Heart left ventricle (tissue), 16 donors: ENCODE measurements at regions of chr5 and their contacts with region 1.

Region 1: DNA sequence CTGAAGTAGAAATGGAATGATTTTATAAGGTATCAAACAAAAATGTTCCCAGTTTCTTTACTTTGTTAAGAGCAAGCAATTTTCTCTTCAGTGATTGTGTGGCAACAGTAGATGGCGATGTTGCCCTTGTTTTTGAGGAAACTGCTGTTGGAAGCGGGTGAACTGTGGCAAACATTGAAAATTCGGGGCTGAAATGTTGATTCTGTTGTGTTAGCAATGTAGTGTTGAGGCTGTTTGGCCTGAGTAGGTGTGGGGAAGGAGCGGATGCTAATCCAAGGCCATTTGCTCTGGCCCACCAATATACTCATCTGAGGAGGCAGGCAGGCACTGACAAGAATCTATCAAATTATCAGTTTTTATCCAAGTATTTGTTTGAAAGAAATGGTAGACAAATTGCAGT is 129.8 kb downstream of the SLC12A2 start:
- DNase-seq: peak in 4 of 5 donors; percentile 27 to 47 (median 36)
- ATAC-seq: peak in 2 of 4 donors; percentile 4 to 41
- H3K4me3 ChIP-seq: no peak overlapping the region
- H3K27ac ChIP-seq: no peak overlapping the region
- H3K4me1 ChIP-seq: peaks cover 0 to 11% (median 3%) of the 10 kb centered on the region in 12 donors
- H3K27me3 ChIP-seq: no peaks in the 10 kb centered on the region
- CTCF ChIP-seq: peak; percentile 59 to 88 (median 77)
- POLR2A ChIP-seq: no peak

Region 2: DNA sequence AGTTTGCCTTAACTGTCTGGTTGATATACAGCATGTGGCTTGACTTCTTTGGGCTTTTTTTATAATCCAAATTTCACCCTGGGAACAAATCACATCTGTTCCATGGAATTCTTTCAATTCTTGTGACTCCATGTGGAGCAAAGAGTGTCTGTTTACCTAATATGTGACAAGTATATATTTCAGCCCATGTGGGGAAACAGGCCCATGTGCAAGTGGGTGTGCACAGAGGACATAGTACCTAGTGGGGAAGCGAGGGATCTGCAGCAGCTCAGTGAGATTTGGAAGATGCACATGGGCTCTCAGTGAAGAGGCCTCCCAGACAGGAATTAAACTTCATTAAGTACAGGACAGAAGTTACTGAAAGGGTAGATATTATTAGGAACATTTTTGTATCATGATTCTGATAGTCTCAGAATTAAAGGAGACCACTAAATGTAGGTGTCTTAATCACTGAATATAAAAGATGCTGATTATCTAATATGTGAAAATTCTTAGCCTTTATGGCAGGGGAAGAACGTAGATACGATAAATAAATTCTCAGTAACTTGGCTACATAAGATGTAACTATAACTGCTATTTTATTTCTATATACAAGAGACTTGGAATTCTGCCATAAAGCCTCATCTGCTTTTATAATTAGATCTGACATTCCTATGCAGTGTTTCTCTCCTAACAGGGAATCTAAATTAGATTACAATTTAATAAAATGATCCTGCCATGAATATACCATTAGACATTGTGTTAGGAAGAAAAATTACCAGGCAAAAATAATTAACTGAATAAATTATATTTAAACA is 51.4 kb after region 1 on chr5:
- intact Hi-C with region 1: loop called in 2 of 10 experiments (anchors 5 to 10 kb)
- DNase-seq: no peak
- ATAC-seq: peak; percentile 31 to 67 (median 54)
- H3K4me3 ChIP-seq: no peak overlapping the region
- H3K27ac ChIP-seq: peak overlapping the region in 4 of 12 donors; percentile 1 to 25 (median 8)
- H3K4me1 ChIP-seq: peaks cover 0 to 30% (median 5%) of the 10 kb centered on the region in 12 donors
- H3K27me3 ChIP-seq: no peaks in the 10 kb centered on the region
- CTCF ChIP-seq: peak in 1 of 12 donors; percentile 9
- POLR2A ChIP-seq: no peak

Region 3: GRCh38 chr5:128378196-128378595 is 164.9 kb after region 1 on chr5:
- intact Hi-C with region 1: loop called in 1 of 10 experiments (anchors 10 kb)
- DNase-seq: no peak
- ATAC-seq: no peak
- H3K4me3 ChIP-seq: no peak overlapping the region
- H3K27ac ChIP-seq: no peak overlapping the region
- H3K4me1 ChIP-seq: no peaks in the 10 kb centered on the region
- H3K27me3 ChIP-seq: no peaks in the 10 kb centered on the region
- CTCF ChIP-seq: no peak
- POLR2A ChIP-seq: no peak

Region 4: DNA sequence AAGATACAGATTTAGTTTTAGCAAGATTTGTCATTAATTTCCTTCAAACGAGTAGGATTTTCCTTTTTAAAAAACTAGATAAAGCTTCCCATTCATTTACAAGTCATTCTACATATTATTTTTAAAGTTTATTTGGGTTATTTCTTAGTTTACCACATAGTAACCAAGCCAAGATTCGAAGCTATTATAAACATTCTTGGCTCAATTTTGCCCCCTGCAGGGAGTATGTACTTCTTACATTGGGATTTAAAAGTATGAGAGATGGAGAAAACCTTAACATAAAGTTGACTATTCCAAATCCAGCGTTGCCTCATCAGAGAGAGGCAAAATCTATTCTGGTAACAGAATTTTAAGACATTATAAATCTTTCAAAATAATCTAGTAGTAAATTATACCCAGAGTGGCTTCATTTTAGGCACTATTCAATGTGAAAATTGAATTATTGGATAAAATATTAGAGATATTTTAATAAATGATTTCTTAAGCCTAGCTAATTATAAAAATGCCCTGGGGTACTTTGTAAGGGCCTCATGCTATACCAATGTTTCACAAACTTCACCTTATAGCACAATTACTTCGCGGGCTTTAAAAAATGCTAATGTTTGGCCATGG is 285.6 kb after region 1 on chr5:
- intact Hi-C with region 1: loop called (anchors 1 to 2 kb)
- DNase-seq: peak in 1 of 5 donors; percentile 17
- ATAC-seq: peak in 2 of 4 donors; percentile 50 to 61
- H3K4me3 ChIP-seq: no peak overlapping the region
- H3K27ac ChIP-seq: no peak overlapping the region
- H3K4me1 ChIP-seq: peaks cover 0 to 4% (median 0%) of the 10 kb centered on the region in 12 donors
- H3K27me3 ChIP-seq: no peaks in the 10 kb centered on the region
- CTCF ChIP-seq: peak; percentile 27 to 72 (median 58)
- POLR2A ChIP-seq: no peak

Region 5: GRCh38 chr5:128674825-128675446 is 461.6 kb after region 1 on chr5:
- intact Hi-C with region 1: loop called in 4 of 10 experiments (anchors 5 to 10 kb)
- DNase-seq: peak in 1 of 5 donors; percentile 28
- ATAC-seq: no peak
- H3K4me3 ChIP-seq: no peak overlapping the region
- H3K27ac ChIP-seq: no peak overlapping the region
- H3K4me1 ChIP-seq: no peaks in the 10 kb centered on the region
- H3K27me3 ChIP-seq: no peaks in the 10 kb centered on the region
- CTCF ChIP-seq: peak; percentile 14 to 61 (median 48)
- POLR2A ChIP-seq: no peak

Region 6: GRCh38 chr5:128844354-128844923 is 631.1 kb after region 1 on chr5:
- intact Hi-C with region 1: loop called (anchors 2 to 5 kb)
- DNase-seq: no peak
- ATAC-seq: no peak
- H3K4me3 ChIP-seq: no peak overlapping the region
- H3K27ac ChIP-seq: no peak overlapping the region
- H3K4me1 ChIP-seq: no peaks in the 10 kb centered on the region
- H3K27me3 ChIP-seq: no peaks in the 10 kb centered on the region
- CTCF ChIP-seq: peak; percentile 17 to 59 (median 40)
- POLR2A ChIP-seq: no peak